Breast epithelium (tissue), 4 donors: ENCODE measurements at regions of chr11 and their contacts with region 1.

Region 1: GRCh38 chr11:34438529-34439507 is at the start of gene CAT:
- DNase-seq: peak; percentile 98
- H3K4me3 ChIP-seq: peak within 1 kb of the TSS; percentile 65 to 98 (median 71)
- H3K27ac ChIP-seq: peak within 1 kb of the TSS; percentile 87 to 99
- H3K4me1 ChIP-seq: no peaks in the 10 kb centered on the region
- H3K27me3 ChIP-seq: no peaks in the 10 kb centered on the region
- CTCF ChIP-seq: no peak
- POLR2A ChIP-seq: peak; percentile 73
- total RNA-seq, gene CAT: 177 to 469 (median 190) TPM

Region 2: DNA sequence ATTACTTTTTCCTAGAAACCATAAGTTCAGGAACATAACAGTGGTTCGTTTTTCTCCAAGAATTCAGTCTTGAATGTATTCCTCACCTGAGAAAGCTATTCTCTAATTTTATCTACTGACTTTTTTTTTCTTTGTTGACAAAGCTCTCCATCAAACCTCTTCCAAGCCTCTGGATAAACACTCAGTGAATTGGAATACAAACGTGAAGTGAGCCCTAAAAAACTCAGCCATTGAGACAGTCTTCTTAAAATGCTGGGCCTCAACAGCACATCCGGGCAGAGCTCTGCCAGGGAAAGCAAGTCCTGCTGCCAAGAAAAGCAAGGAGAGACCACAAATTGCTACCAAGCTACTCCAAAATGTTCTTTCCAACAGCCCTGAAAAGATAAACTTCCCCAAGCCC is 988.3 kb after region 1 on chr11:
- intact Hi-C with region 1: loop called (anchors 5 kb)
- DNase-seq: peak in 1 of 2 donors; percentile 56
- H3K4me3 ChIP-seq: no peak overlapping the region
- H3K27ac ChIP-seq: peak overlapping the region; percentile 4 to 56
- H3K4me1 ChIP-seq: no peaks in the 10 kb centered on the region
- H3K27me3 ChIP-seq: no peaks in the 10 kb centered on the region
- CTCF ChIP-seq: no peak
- POLR2A ChIP-seq: no peak